Psoas muscle (tissue), 8 donors: ENCODE measurements at regions of chr7 and their contacts with region 1.

Region 1: GRCh38 chr7:143408686-143409561 is at the start of gene EPHA1:
- DNase-seq: no peak
- ATAC-seq: no peak
- H3K4me3 ChIP-seq: no peak within 1 kb of the TSS
- H3K27ac ChIP-seq: no peak within 1 kb of the TSS
- H3K4me1 ChIP-seq: no peaks in the 10 kb centered on the region
- H3K27me3 ChIP-seq: no peaks in the 10 kb centered on the region
- CTCF ChIP-seq: no peak
- total RNA-seq, gene EPHA1: 0.28 to 0.38 TPM in 2 of 4 donors, not detected in the others

Region 2: DNA sequence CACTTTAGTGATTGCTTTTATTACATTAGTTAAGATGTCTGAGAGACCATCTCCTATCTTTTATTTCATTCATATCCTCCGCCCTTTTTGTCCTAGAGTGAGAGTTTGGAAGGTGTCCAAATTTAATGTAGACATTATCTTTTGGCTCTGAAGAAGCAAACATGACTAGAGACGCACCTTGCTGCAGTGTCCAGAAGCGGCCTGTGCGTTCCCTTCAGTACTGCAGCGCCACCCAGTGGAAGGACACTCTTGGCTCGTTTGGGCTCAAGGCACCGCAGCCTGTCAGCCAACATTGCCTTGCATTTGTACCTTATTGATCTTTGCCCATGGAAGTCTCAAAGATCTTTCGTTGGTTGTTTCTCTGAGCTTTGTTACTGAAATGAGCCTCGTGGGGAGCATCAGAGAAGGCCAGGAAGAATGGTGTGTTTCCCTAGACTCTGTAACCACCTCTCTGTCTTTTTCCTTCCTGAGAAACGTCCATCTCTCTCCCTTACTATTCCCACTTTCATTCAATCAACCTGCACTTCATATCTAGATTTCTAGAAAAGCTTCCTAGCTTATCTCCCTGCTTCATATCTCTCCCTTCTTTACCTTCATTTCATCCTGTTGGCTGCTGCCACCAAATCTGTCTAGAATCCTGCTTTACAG is 103.4 kb before region 1 on chr7:
- intact Hi-C with region 1: loop called in 1 of 2 experiments (anchors 5 kb)
- DNase-seq: peak; percentile 68 to 75
- ATAC-seq: peak; percentile 67 to 88 (median 77)
- H3K4me3 ChIP-seq: no peak overlapping the region
- H3K27ac ChIP-seq: no peak overlapping the region
- H3K4me1 ChIP-seq: peaks cover 8% of the 10 kb centered on the region
- H3K27me3 ChIP-seq: no peaks in the 10 kb centered on the region
- CTCF ChIP-seq: peak; percentile 72